Natural killer cell (primary cell): ENCODE measurements at regions of chr10 and their contacts with region 1.

Region 1: GRCh38 chr10:88553116-88553752 is 29.9 kb downstream of the RNLS start:
- DNase-seq: peak in 1 of 2 donors; percentile 76
- ATAC-seq: peak; percentile 60 to 75 (median 74)
- H3K4me3 ChIP-seq: no peak overlapping the region
- H3K4me3 Mint-ChIP-seq: no peak overlapping the region
- H3K27ac ChIP-seq: no peak overlapping the region
- H3K27ac Mint-ChIP-seq: no peak overlapping the region
- H3K4me1 ChIP-seq: no peaks in the 10 kb centered on the region
- H3K4me1 Mint-ChIP-seq: no peaks in the 10 kb centered on the region
- H3K27me3 ChIP-seq: no peaks in the 10 kb centered on the region
- H3K27me3 Mint-ChIP-seq: no peaks in the 10 kb centered on the region
- CTCF ChIP-seq: peak; percentile 42

Region 2: GRCh38 chr10:87531908-87532622 is 1021.2 kb before region 1 on chr10:
- intact Hi-C with region 1: loop called (anchors 10 kb)
- DNase-seq: no peak
- ATAC-seq: no peak
- H3K4me3 ChIP-seq: no peak overlapping the region
- H3K4me3 Mint-ChIP-seq: no peak overlapping the region
- H3K27ac ChIP-seq: no peak overlapping the region
- H3K27ac Mint-ChIP-seq: no peak overlapping the region
- H3K4me1 ChIP-seq: no peaks in the 10 kb centered on the region
- H3K4me1 Mint-ChIP-seq: peaks cover 9 to 23% of the 10 kb centered on the region in 2 donors
- H3K27me3 ChIP-seq: no peaks in the 10 kb centered on the region
- H3K27me3 Mint-ChIP-seq: no peaks in the 10 kb centered on the region
- CTCF ChIP-seq: no peak

Region 3: DNA sequence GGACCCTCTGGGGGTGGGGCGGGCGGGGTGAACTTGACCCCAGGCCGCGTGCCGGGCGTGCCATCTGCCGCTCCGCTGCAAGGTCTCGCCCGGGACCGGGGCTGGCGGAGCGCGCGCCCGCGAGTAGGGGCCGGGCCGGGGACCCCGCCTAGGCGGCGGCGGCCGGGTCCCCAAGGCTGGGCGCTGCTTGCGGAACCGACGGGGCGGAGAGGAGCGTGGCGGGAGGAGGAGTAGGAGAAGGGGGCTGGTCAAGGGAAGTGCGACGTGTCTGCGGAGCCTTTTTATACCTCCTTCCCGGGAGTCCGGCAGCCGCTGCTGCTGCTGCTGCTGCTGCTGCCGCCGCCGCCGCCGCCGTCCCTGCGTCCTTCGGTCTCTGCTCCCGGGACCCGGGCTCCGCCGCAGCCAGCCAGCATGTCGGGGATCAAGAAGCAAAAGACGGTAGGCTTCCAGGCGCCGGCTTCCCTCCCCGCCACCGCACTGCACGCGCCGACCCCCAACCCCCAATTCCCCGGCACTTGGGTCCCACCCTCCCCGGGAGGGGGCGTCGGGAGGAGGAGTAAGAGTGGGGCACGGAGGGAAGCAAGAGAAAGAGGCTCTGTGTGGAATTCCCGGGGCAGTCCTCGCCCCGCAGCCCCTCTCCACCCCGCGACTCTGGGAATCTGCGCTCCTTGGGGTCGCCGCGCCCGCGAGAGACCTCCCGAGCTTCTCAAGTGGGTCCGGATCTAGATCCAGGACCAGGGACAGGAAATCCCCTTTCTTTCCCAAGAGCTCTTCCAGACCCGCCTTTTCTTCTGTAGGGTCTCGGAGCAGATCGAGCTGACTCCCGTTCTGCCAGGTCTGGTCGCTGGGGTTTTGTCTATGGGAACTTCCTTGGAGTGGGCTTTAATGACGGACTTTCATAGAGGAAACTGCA is 893.4 kb before region 1 on chr10 and contains the start of gene PAPSS2:
- intact Hi-C with region 1: loop called (anchors 5 kb)
- DNase-seq: peak in 1 of 2 donors; percentile 23
- ATAC-seq: peak; percentile 36 to 60 (median 51)
- H3K4me3 ChIP-seq: peak within 1 kb of the TSS; percentile 23
- H3K4me3 Mint-ChIP-seq: peak within 1 kb of the TSS; percentile 81
- H3K27ac ChIP-seq: no peak within 1 kb of the TSS
- H3K27ac Mint-ChIP-seq: peak within 1 kb of the TSS in 1 of 2 donors; percentile 58
- H3K4me1 ChIP-seq: peaks cover 12% of the 10 kb centered on the region
- H3K4me1 Mint-ChIP-seq: peaks cover 13 to 23% of the 10 kb centered on the region in 2 donors
- H3K27me3 ChIP-seq: peaks cover 15% of the 10 kb centered on the region
- H3K27me3 Mint-ChIP-seq: peaks cover 24 to 53% of the 10 kb centered on the region in 2 donors
- CTCF ChIP-seq: no peak
- total RNA-seq, gene PAPSS2: 0.13 to 1.1 TPM in 2 of 3 donors, not detected in the other

Region 4: DNA sequence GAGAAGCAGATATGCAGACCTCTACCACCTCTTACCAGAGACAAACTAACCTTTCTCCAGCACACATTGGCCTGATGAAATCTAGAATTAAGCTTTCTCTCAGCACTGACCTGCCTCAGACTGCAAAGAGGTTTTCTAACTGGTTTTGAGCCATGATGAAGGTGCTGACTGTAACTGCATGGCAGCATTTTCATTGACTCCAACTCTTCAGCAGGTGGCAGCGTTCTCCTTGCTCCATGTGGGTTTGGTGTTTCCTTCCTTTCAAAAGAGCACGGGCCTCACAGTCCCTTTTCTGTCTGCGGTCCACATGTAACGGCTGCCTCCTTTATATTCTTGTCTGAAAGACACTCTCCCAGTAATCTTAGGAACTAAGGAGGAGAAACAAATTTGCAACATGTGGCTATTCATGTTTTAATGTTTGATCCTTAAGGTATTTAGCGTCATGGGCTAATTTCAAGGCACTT is 702.5 kb before region 1 on chr10:
- intact Hi-C with region 1: loop called (anchors 1 kb)
- DNase-seq: peak in 1 of 2 donors; percentile 79
- ATAC-seq: peak; percentile 65 to 88 (median 79)
- H3K4me3 ChIP-seq: no peak overlapping the region
- H3K4me3 Mint-ChIP-seq: no peak overlapping the region
- H3K27ac ChIP-seq: no peak overlapping the region
- H3K27ac Mint-ChIP-seq: no peak overlapping the region
- H3K4me1 ChIP-seq: no peaks in the 10 kb centered on the region
- H3K4me1 Mint-ChIP-seq: peaks cover 6 to 12% of the 10 kb centered on the region in 2 donors
- H3K27me3 ChIP-seq: no peaks in the 10 kb centered on the region
- H3K27me3 Mint-ChIP-seq: no peaks in the 10 kb centered on the region
- CTCF ChIP-seq: peak; percentile 34